ENCODE measurements at regions of chr1 and their contacts with region 1.

Region 1: DNA sequence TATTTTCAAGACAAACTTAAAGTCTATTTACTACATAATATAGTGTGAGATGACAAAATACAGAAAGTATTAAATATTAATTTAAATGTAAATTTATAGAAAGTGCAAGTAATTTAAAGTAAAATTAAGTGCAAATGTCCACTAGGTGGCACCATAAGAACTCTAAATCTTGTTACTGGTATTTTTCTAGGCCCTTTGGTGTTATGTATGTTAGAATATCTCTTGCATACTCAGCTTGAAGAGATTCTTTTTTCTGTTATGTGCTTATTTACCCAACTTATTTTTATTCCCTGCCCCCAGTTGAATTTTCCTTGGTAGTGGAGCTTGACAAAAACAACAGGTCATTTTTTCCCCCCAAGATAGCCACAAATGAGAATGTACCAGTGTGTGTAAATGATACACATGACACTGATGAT is 71.5 kb downstream of the RPS6KC1 start:
- DNase-seq: no peak
- H3K4me3 ChIP-seq: no peak overlapping the region
- CTCF ChIP-seq: peak; percentile 13

Region 2: DNA sequence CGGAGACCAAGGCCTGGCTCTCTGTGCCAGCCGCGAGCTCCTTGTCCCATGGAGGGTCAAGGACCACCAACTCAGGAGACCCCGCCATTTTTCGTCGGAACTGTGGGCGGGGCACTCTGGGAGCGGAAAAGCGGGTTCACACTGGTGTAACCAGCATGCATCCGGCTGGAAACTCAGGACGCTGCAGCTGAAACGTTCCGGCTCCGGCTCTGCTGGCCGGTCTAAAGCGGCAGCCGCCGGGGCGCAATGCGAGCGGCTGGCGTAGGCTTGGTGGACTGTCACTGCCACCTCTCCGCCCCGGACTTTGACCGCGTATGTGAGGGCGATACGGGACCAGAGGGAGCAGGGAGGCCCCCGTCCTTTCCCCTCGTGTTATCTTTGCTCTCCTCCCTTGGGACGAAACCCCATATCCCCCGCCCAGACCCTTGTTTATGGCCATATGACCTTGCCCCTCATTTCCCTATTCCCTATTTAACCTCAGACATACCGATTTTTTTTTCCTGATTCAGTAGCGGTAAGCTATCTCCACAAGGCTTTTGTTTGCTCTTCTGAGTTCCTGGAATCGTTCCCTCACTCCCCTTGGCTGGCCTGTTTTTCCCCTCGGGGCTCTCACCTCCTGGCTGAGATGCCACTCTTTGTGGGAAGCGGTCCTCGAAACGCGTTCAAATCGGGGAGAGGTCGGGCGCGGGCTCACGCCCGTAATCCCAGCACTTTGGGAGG is 330.7 kb before region 1 on chr1 and contains the starts of genes NSL1 and TATDN3:
- CTCF ChIA-PET with region 1: no interaction called
- POLR2A ChIA-PET with region 1: no interaction called
- DNase-seq: no peak
- H3K4me3 ChIP-seq: peak within 1 kb of the TSS; percentile 95
- CTCF ChIP-seq: no peak

Region 3: GRCh38 chr1:212814537-212815334 is 307.8 kb before region 1 on chr1:
- CTCF ChIA-PET with region 1: no interaction called
- POLR2A ChIA-PET with region 1: no interaction called
- DNase-seq: no peak
- H3K4me3 ChIP-seq: no peak overlapping the region
- CTCF ChIP-seq: no peak

Region 4: GRCh38 chr1:213103377-213104306 is 18.9 kb before region 1 on chr1:
- CTCF ChIA-PET with region 1: interaction called, 18 read pairs
- POLR2A ChIA-PET with region 1: no interaction called
- DNase-seq: no peak
- H3K4me3 ChIP-seq: no peak overlapping the region
- CTCF ChIP-seq: no peak

Region 5: DNA sequence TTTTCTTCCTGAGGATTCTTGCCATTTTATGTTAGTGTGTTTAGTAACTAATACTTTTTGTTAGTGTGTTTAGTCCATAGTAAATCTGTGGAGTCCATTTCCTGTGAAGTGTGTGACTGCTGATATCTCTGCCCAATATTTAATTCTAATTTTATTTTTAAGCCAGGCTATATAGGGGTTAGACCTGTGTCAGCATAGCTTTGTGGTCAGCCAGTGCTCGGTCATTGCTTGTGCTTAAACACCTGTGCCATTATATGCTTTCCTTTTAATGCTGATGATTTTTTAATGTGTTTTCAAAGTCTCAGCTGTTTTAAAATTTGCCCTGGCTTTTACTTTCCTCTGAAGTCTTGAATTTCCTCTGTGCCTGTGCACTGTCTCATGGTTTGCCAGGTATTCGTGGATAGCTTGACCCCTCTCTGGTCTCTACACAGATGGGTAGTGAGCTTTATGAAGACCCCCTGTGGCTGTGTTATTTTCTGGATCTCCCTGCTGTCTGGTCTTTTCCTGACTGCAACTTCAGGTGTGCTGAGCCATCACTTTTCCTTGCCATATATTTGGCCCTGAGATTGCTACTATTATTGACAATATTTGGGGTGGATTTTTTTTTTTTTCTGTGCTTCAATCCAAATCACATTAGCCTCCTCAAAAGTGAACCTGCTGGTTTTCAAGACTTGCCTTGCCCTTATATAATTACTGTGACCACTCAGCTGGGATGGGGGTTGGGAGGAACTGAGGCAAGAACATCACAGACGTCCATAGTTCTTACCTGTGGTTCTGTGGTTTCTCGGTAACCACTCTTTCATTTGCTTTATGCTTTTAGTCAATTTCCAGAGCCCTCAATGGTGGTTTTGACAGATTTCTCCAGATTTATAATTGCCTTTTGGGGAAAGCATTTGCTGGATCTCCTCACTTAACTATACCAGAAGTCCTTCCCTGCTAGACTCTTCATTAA is 11.9 kb before region 1 on chr1:
- CTCF ChIA-PET with region 1: interaction called, 13 read pairs
- POLR2A ChIA-PET with region 1: no interaction called
- DNase-seq: no peak
- H3K4me3 ChIP-seq: no peak overlapping the region
- CTCF ChIP-seq: no peak

Region 6: GRCh38 chr1:213409971-213410370 is 287.4 kb after region 1 on chr1:
- CTCF ChIA-PET with region 1: no interaction called
- POLR2A ChIA-PET with region 1: no interaction called
- DNase-seq: no peak
- H3K4me3 ChIP-seq: no peak overlapping the region
- CTCF ChIP-seq: no peak

Region 7: DNA sequence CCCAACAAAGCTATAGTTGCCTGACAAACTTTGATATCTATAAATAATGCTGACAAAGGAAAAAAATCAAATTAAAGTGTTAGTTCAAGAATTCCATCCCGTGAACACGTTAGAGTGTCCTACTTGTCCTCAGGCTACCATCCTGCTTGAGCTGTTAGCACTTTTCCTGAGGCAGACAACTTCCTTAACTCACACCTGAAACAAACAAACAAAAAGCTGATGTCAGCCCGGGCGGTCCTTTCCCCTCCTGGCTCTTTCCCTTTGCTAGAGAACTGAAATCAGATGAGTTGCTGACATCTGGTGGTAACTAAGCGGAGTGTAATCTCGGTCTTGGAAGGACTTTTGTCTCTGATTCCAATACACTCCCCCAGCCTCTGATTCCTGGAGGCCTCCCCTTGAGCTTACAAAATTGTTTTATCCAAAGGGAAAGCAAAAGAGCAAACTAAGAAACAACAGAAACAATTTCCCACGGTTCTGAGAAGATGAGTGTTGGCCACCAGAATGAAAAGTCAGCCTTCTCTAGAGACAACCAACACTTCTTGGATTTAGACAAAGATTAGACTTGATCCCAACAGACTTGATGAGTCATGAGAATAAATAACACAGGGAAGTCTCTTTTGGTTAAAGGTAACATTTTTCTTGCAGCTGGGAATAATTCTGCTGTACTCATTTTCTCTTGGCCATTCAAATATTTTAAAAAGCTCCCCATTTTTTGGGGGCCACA is 1000.7 kb after region 1 on chr1:
- CTCF ChIA-PET with region 1: interaction called, 15 read pairs
- POLR2A ChIA-PET with region 1: no interaction called
- DNase-seq: no peak
- H3K4me3 ChIP-seq: no peak overlapping the region
- CTCF ChIP-seq: peak; percentile 48

Measured in AG04449 (cell line).